ENCODE measurements at regions of chr12 and their contacts with region 1.

Region 1: DNA sequence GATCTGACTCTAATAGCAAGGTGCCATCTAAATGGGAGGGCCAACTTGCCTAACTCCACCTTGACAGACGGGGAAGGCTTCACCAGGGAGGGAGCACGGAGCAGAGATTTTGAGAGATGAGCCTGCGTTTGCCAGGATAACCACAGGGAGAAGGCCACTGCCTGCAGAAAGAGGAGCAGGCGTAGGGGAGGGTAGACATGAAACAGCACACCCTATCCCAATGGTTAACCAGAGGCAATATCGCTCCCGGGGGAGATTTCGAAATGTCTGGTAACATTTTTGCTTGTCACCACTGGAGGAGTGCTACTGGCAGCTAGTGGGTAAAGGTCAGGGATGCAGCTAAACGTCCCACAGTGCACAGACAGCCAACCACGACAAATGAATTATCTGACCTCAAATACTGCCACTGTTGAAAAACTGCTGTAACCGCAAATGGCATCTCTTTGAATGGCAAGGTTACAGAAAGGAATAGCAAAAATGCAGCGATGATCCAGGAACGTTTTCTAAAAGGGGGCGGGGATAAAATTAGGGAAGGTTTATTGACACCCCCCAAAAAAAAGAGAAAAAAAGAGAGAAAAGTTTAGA is 126.0 kb upstream of the ATF7IP start:
- DNase-seq: peak in 2 of 5 donors; percentile 17 to 50
- H3K4me3 ChIP-seq: peak overlapping the region in 1 of 2 donors; percentile 28
- H3K4me3 Mint-ChIP-seq: peak overlapping the region; percentile 73 to 91 (median 87)
- H3K27ac ChIP-seq: peak overlapping the region; percentile 25
- H3K27ac Mint-ChIP-seq: peak overlapping the region; percentile 44 to 93 (median 90)
- H3K4me1 ChIP-seq: peaks cover 19% of the 10 kb centered on the region
- H3K4me1 Mint-ChIP-seq: peaks cover 13 to 22% (median 18%) of the 10 kb centered on the region in 4 donors
- H3K27me3 ChIP-seq: no peaks in the 10 kb centered on the region
- H3K27me3 Mint-ChIP-seq: no peaks in the 10 kb centered on the region

Region 2: DNA sequence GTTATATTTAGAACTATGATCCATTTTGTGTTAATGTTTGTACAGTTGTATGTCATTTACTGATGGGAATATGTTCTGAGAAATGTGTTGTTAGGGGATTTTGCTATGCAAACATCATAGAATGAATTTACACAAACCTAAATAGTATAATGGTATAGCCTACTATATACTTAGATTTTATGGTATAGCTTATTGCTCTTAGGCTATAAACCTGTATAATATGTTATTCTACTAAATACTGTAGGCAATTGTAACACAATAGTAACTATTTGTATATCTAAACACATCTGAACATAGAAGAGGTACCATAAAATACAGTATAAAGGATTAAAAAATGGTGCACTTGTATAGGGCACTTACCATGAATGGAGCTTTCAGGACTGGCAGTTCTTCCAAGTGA is 152.6 kb before region 1 on chr12:
- CTCF ChIA-PET with region 1: no interaction called
- POLR2A ChIA-PET with region 1: no interaction called
- intact Hi-C with region 1: no loop called
- DNase-seq: no peak
- H3K4me3 ChIP-seq: no peak overlapping the region
- H3K4me3 Mint-ChIP-seq: no peak overlapping the region
- H3K27ac ChIP-seq: no peak overlapping the region
- H3K27ac Mint-ChIP-seq: no peak overlapping the region
- H3K4me1 ChIP-seq: no peaks in the 10 kb centered on the region
- H3K4me1 Mint-ChIP-seq: no peaks in the 10 kb centered on the region
- H3K27me3 ChIP-seq: no peaks in the 10 kb centered on the region
- H3K27me3 Mint-ChIP-seq: peaks cover 0 to 2% of the 10 kb centered on the region in 2 donors

Region 3: GRCh38 chr12:14365294-14366208 is 126.1 kb after region 1 on chr12 and contains the start of gene ATF7IP:
- CTCF ChIA-PET with region 1: interaction called, 64 read pairs
- POLR2A ChIA-PET with region 1: interaction called, 37 read pairs
- intact Hi-C with region 1: loop called (anchors 1 kb)
- DNase-seq: peak; percentile 95 to 97 (median 97)
- H3K4me3 ChIP-seq: peak within 1 kb of the TSS; percentile 45 to 81
- H3K4me3 Mint-ChIP-seq: peak within 1 kb of the TSS; percentile 82 to 99 (median 92)
- H3K27ac ChIP-seq: peak within 1 kb of the TSS; percentile 90
- H3K27ac Mint-ChIP-seq: peak within 1 kb of the TSS; percentile 85 to 99 (median 96)
- H3K4me1 ChIP-seq: peaks cover 34% of the 10 kb centered on the region
- H3K4me1 Mint-ChIP-seq: peaks cover 11 to 55% (median 29%) of the 10 kb centered on the region in 4 donors
- H3K27me3 ChIP-seq: no peaks in the 10 kb centered on the region
- H3K27me3 Mint-ChIP-seq: no peaks in the 10 kb centered on the region
- total RNA-seq, gene ATF7IP: 209 to 223 TPM

Region 4: GRCh38 chr12:14417715-14418114 is 178.3 kb after region 1 on chr12:
- CTCF ChIA-PET with region 1: interaction called, 76 read pairs
- POLR2A ChIA-PET with region 1: interaction called, 14 read pairs
- intact Hi-C with region 1: loop called (anchors 1 kb)
- DNase-seq: peak; percentile 70 to 86 (median 79)
- H3K4me3 ChIP-seq: no peak overlapping the region
- H3K4me3 Mint-ChIP-seq: peak overlapping the region; percentile 72 to 88 (median 84)
- H3K27ac ChIP-seq: peak overlapping the region; percentile 34
- H3K27ac Mint-ChIP-seq: peak overlapping the region; percentile 66 to 95 (median 86)
- H3K4me1 ChIP-seq: peaks cover 73% of the 10 kb centered on the region
- H3K4me1 Mint-ChIP-seq: peaks cover 46 to 73% (median 59%) of the 10 kb centered on the region in 4 donors
- H3K27me3 ChIP-seq: no peaks in the 10 kb centered on the region
- H3K27me3 Mint-ChIP-seq: no peaks in the 10 kb centered on the region

Region 5: DNA sequence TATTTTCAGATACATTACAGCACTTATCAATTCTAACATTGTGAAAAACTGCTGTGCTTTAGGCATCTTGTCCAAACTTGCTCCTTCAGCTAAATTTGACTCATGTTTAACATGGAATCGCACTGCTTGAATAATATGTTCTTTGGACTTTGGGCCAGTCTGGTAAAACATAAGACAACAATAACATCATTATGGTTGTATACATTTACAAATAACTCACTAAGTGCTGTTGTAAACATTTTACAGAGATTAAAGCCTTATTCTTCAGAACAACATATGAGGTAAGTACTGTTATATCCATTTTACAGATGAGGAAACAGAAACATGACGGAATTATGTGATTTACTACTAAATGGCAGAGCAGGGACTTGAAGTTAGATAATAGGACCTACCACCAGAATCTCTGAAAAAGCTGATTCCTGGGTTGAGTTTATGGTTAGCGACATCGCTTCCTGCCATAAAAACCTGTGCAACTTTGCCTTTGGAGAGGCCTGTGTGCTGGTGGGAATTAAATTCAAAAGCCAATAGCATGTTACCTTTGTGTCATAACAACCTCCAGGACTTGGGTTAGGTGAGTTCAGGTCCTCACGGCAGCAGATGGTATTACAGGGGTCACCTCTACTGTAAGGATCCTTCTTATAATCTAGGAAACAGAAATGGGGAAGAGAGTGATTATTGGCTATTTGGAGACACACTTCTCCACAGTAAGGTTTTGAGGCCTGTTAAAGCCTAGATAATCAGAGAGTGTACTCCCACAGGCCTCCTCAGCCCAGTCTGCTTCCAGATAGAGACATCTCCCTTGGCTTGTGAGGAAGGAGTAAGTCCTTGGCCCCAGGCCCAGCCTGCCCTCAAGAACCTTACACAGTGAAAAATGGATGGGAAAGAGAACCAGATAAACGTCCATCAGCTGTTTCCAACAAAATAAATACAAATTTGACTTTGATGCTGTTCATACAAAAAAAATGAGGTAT is 266.5 kb after region 1 on chr12:
- CTCF ChIA-PET with region 1: no interaction called
- POLR2A ChIA-PET with region 1: no interaction called
- intact Hi-C with region 1: loop called (anchors 5 kb)
- DNase-seq: no peak
- H3K4me3 ChIP-seq: no peak overlapping the region
- H3K4me3 Mint-ChIP-seq: no peak overlapping the region
- H3K27ac ChIP-seq: no peak overlapping the region
- H3K27ac Mint-ChIP-seq: peak overlapping the region in 3 of 7 donors; percentile 3 to 66 (median 38)
- H3K4me1 ChIP-seq: no peaks in the 10 kb centered on the region
- H3K4me1 Mint-ChIP-seq: peaks cover 0 to 2% (median 0%) of the 10 kb centered on the region in 4 donors
- H3K27me3 ChIP-seq: no peaks in the 10 kb centered on the region
- H3K27me3 Mint-ChIP-seq: no peaks in the 10 kb centered on the region

Region 6: DNA sequence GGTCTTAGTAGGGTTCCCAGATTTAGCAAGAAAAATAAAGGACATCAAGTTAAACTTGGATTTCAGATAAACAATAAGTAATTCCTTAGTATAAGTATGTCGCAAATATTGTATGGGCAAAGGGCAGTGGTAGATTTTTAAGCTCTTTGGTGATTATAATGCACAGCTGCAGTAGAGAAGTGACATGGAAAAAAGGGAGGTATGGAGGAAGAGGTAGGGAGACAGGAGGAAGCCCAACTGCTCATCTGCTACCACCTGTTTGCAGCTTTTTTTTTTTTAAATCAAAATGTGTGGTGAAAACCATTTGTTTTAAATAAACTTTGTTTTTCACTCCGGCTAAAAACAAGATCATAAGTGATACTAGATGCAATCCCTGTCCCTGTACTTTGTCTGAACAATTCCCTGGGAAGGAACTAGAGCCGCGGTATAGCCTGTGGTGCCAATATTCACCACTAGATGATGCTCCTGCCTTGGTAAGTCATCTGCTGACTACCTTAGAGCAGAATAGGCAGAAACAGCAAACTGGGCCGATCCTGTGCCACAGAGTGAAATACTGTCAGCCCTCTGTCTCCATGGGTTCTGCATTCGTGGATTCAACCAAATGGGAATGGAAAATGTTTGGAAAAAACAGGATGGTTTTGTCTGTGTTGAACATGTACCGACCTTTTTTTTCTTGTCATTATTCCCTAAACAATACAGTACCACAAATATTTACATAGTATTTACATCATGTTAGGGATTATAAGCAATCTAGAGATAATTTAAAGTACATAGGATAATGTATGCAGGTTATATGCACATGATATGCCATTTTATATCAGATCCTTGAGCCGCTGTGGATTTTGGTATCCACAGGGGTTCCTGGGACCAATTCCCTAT is 390.6 kb after region 1 on chr12:
- CTCF ChIA-PET with region 1: interaction called, 23 read pairs
- POLR2A ChIA-PET with region 1: interaction called, 5 read pairs
- intact Hi-C with region 1: loop called (anchors 2 kb)
- DNase-seq: peak; percentile 60 to 67 (median 65)
- H3K4me3 ChIP-seq: no peak overlapping the region
- H3K4me3 Mint-ChIP-seq: no peak overlapping the region
- H3K27ac ChIP-seq: no peak overlapping the region
- H3K27ac Mint-ChIP-seq: no peak overlapping the region
- H3K4me1 ChIP-seq: no peaks in the 10 kb centered on the region
- H3K4me1 Mint-ChIP-seq: no peaks in the 10 kb centered on the region
- H3K27me3 ChIP-seq: no peaks in the 10 kb centered on the region
- H3K27me3 Mint-ChIP-seq: peaks cover 3 to 5% of the 10 kb centered on the region in 2 donors

Region 7: GRCh38 chr12:14716848-14717444 is 477.5 kb after region 1 on chr12:
- CTCF ChIA-PET with region 1: interaction called, 30 read pairs
- POLR2A ChIA-PET with region 1: no interaction called
- intact Hi-C with region 1: loop called (anchors 1 kb)
- DNase-seq: peak; percentile 46 to 53 (median 48)
- H3K4me3 ChIP-seq: no peak overlapping the region
- H3K4me3 Mint-ChIP-seq: no peak overlapping the region
- H3K27ac ChIP-seq: no peak overlapping the region
- H3K27ac Mint-ChIP-seq: peak overlapping the region in 2 of 7 donors; percentile 8 to 37
- H3K4me1 ChIP-seq: no peaks in the 10 kb centered on the region
- H3K4me1 Mint-ChIP-seq: peaks cover 0 to 2% (median under 1%) of the 10 kb centered on the region in 4 donors
- H3K27me3 ChIP-seq: no peaks in the 10 kb centered on the region
- H3K27me3 Mint-ChIP-seq: peaks cover 4 to 7% of the 10 kb centered on the region in 2 donors